CD4-positive, alpha-beta T cell (primary cell): ENCODE measurements at regions of chr3 and their contacts with region 1.

Region 1: GRCh38 chr3:141575879-141576743 is 89.3 kb downstream of the RASA2 start:
- DNase-seq: peak in 3 of 14 experiments; percentile 32 to 48 (median 38)
- ATAC-seq: peak; percentile 88
- H3K4me3 ChIP-seq: no peak overlapping the region
- H3K4me3 Mint-ChIP-seq: peak overlapping the region; percentile 7
- H3K27ac ChIP-seq: no peak overlapping the region
- H3K27ac Mint-ChIP-seq: peak overlapping the region; percentile 55
- H3K4me1 ChIP-seq: no peaks in the 10 kb centered on the region
- H3K4me1 Mint-ChIP-seq: peaks cover 15% of the 10 kb centered on the region
- H3K27me3 ChIP-seq: no peaks in the 10 kb centered on the region
- H3K27me3 Mint-ChIP-seq: no peaks in the 10 kb centered on the region
- CTCF ChIP-seq: peak; percentile 30

Region 2: DNA sequence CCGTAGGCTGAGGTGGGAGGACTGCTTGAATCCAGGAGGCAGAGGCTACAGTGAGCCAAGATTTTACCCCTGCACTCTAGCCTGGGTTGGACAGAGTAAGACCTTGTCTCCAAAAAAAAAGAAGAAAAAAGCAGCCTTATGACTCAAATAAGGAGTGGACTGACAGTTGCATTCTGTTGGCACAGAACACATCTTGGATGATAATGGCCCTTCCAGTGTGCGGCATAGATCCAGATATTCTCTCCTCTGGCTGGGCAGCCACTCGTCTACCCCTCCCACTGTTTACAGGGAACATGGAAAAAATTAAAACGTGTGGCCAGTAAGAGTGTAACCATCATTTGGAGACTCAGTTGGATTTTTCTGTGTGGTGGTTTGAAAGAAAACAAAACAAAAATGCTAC is 43.3 kb after region 1 on chr3:
- CTCF ChIA-PET with region 1: no interaction called
- POLR2A ChIA-PET with region 1: no interaction called
- intact Hi-C with region 1: loop called in 1 of 2 experiments (anchors 5 kb)
- DNase-seq: no peak
- ATAC-seq: no peak
- H3K4me3 ChIP-seq: no peak overlapping the region
- H3K4me3 Mint-ChIP-seq: no peak overlapping the region
- H3K27ac ChIP-seq: no peak overlapping the region
- H3K27ac Mint-ChIP-seq: no peak overlapping the region
- H3K4me1 ChIP-seq: no peaks in the 10 kb centered on the region
- H3K4me1 Mint-ChIP-seq: no peaks in the 10 kb centered on the region
- H3K27me3 ChIP-seq: no peaks in the 10 kb centered on the region
- H3K27me3 Mint-ChIP-seq: no peaks in the 10 kb centered on the region
- CTCF ChIP-seq: no peak

Region 3: DNA sequence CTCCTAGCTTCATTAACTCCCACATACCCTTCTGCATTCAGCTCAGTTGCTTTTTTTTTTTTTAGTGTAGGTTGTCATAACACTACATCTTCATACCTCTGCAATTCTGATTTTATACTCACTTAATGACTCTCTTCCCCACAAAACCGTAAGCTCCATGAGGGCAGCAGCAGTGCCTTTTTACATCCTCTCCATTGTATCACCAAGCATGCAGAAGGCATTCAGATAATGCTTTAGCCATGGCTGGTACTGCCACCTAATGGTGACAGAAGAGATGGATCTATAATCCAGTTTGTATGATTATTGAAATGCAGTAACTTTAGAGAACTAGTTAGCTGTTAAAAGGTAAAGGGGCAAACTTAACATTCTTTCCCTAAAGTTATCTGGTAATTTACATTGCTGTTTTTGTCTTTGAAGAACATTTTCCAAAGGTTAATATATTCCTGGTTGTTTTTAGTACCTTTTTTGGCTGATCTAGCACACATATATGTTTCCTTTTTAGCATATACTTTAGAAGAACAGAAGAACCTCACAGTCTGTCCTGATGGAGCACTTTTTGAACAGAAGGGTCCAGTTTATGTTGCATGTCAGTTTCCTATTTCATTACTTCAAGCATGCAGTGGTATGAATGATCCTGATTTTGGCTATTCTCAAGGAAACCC is 337.2 kb after region 1 on chr3:
- CTCF ChIA-PET with region 1: no interaction called
- POLR2A ChIA-PET with region 1: no interaction called
- intact Hi-C with region 1: loop called (anchors 1 to 2 kb)
- DNase-seq: peak in 12 of 14 experiments; percentile 16 to 80 (median 34)
- ATAC-seq: peak; percentile 90
- H3K4me3 ChIP-seq: no peak overlapping the region
- H3K4me3 Mint-ChIP-seq: no peak overlapping the region
- H3K27ac ChIP-seq: no peak overlapping the region
- H3K27ac Mint-ChIP-seq: no peak overlapping the region
- H3K4me1 ChIP-seq: no peaks in the 10 kb centered on the region
- H3K4me1 Mint-ChIP-seq: peaks cover 4% of the 10 kb centered on the region
- H3K27me3 ChIP-seq: no peaks in the 10 kb centered on the region
- H3K27me3 Mint-ChIP-seq: no peaks in the 10 kb centered on the region
- CTCF ChIP-seq: peak; percentile 71

Region 4: DNA sequence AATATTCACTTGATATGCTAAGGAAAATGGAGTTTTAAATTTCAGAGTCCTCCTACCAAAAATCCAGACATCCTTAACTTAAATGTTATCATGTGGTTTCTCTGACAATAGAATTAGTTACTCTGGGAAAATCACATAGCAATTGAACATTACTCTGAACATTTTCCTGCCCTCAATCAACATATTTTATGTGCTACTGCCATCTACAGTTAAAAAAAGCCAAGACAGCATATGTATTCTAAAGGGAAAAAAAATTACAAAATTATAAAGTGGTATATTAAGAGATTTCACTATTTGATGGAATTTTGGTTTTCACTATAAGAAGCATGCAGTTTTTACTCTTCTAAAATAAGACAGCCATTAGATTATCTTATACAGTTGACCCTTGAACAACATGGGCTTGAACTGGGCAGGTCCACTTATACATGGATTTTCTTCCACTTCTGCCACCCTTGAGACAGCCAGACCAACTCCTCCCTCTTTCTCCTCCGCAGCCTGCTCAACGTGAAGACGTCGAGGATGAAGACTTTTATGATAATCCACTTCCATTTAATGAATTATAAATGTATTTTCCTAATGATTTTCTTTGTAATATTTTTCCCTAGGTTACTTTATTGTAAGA is 422.7 kb after region 1 on chr3:
- CTCF ChIA-PET with region 1: no interaction called
- POLR2A ChIA-PET with region 1: no interaction called
- intact Hi-C with region 1: loop called in 1 of 2 experiments (anchors 2 kb)
- DNase-seq: peak in 3 of 14 experiments; percentile 14 to 25 (median 21)
- ATAC-seq: no peak
- H3K4me3 ChIP-seq: no peak overlapping the region
- H3K4me3 Mint-ChIP-seq: no peak overlapping the region
- H3K27ac ChIP-seq: no peak overlapping the region
- H3K27ac Mint-ChIP-seq: no peak overlapping the region
- H3K4me1 ChIP-seq: no peaks in the 10 kb centered on the region
- H3K4me1 Mint-ChIP-seq: no peaks in the 10 kb centered on the region
- H3K27me3 ChIP-seq: no peaks in the 10 kb centered on the region
- H3K27me3 Mint-ChIP-seq: no peaks in the 10 kb centered on the region
- CTCF ChIP-seq: peak; percentile 3

Region 5: GRCh38 chr3:142279965-142280590 is 704.0 kb after region 1 on chr3:
- CTCF ChIA-PET with region 1: no interaction called
- POLR2A ChIA-PET with region 1: no interaction called
- intact Hi-C with region 1: loop called (anchors 1 to 10 kb)
- DNase-seq: peak in 12 of 14 experiments; percentile 1 to 80 (median 18)
- ATAC-seq: peak; percentile 80
- H3K4me3 ChIP-seq: no peak overlapping the region
- H3K4me3 Mint-ChIP-seq: no peak overlapping the region
- H3K27ac ChIP-seq: no peak overlapping the region
- H3K27ac Mint-ChIP-seq: no peak overlapping the region
- H3K4me1 ChIP-seq: peaks cover 12% of the 10 kb centered on the region
- H3K4me1 Mint-ChIP-seq: no peaks in the 10 kb centered on the region
- H3K27me3 ChIP-seq: no peaks in the 10 kb centered on the region
- H3K27me3 Mint-ChIP-seq: no peaks in the 10 kb centered on the region
- CTCF ChIP-seq: peak; percentile 77